AG04450 (cell line): ENCODE measurements at regions of chr1 and their contacts with region 1.

Region 1: GRCh38 chr1:204162231-204163074 is 3.7 kb downstream of the REN start:
- DNase-seq: no peak
- H3K4me3 ChIP-seq: no peak overlapping the region
- H3K27ac ChIP-seq: no peak overlapping the region
- H3K27me3 ChIP-seq: peaks cover 6% of the 10 kb centered on the region
- CTCF ChIP-seq: peak; percentile 100

Region 2: GRCh38 chr1:204104133-204104871 is 58.2 kb before region 1 on chr1:
- CTCF ChIA-PET with region 1: no interaction called
- POLR2A ChIA-PET with region 1: no interaction called
- DNase-seq: no peak
- H3K4me3 ChIP-seq: no peak overlapping the region
- H3K27ac ChIP-seq: no peak overlapping the region
- H3K27me3 ChIP-seq: peaks cover 10% of the 10 kb centered on the region
- CTCF ChIP-seq: no peak

Region 3: GRCh38 chr1:204151552-204152309 is 10.7 kb before region 1 on chr1 and contains the start of gene ETNK2:
- CTCF ChIA-PET with region 1: interaction called, 11 read pairs
- POLR2A ChIA-PET with region 1: interaction called, 3 read pairs
- DNase-seq: no peak
- H3K4me3 ChIP-seq: peak within 1 kb of the TSS; percentile 67
- H3K27ac ChIP-seq: no peak within 1 kb of the TSS
- H3K27me3 ChIP-seq: peaks cover 11% of the 10 kb centered on the region
- CTCF ChIP-seq: no peak
- polyA plus RNA-seq, gene ETNK2: 25.1 and 25.6 TPM in 2 replicates

Region 4: DNA sequence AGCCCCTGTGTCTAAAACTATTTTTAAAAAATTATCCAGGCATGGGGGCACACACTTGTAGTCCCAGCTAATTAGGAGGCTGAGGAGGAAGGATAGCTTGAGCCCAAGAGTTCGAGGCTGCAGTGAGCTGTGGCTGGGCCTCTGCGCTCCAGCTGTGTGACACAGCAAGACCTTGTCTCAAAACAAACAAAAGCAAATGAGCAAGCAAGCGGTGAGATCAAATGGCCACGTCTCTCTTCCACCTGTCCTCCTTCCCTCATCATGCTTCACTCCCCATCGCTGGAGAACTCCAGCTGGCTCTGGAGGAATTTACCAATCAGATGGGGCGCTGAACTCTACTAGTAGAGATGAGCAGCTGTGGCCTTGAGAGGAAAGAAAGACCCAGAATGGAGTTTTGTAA is 17.7 kb after region 1 on chr1:
- CTCF ChIA-PET with region 1: interaction called, 12 read pairs
- POLR2A ChIA-PET with region 1: no interaction called
- DNase-seq: no peak
- H3K4me3 ChIP-seq: no peak overlapping the region
- H3K27ac ChIP-seq: no peak overlapping the region
- H3K27me3 ChIP-seq: no peaks in the 10 kb centered on the region
- CTCF ChIP-seq: no peak

Region 5: DNA sequence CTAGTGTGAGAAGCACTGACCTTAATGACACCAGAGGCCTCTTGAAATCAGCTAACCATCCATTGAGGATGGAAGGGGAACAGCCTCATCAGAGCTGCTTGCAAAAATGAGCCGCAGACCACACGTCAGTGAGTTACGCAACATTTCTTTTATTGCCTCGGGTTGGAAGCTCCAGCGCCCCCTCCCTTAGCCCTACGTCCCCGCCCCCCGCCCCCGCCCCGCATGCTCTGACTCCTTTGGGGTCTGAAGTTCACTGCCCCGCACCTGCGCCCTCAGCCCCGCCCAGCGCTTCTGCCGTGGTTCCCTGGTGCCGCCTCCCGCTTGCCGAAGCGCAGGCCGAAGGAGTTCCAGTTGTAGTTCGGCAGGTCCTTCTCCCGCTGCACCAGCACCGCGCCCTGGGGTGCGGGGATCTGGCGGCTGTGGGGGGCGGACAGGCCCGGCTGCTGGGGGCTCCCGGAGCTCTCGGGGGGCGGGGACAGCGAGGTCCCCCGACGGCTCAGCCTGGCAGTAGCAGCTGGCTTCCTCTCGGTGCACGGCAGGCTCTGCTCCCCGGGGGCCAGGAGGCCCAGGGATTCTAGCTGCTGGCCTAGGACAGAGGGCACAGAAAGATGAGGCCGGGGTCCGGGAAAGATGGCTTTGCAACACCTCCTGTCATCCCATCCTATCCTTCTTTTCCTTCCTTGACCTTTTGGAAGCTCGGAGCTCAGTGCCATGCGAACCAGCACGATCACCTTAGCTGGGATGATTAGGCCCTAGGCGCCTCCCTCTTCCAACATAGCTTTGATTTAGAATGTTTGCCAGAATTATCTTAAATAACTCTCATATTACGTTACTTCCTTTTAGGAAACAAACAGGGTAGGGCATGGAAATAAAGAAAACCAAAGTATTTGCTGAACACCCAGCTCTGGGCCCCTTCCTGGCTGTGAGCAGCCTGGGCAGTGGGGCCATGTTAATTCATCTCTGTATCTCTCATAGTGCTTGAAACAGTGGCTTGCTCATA is 28.1 kb after region 1 on chr1:
- CTCF ChIA-PET with region 1: interaction called, 17 read pairs
- POLR2A ChIA-PET with region 1: no interaction called
- DNase-seq: no peak
- H3K4me3 ChIP-seq: peak overlapping the region; percentile 17; the same call in 1 of the 2 replicates
- H3K27ac ChIP-seq: no peak overlapping the region
- H3K27me3 ChIP-seq: peaks cover 6% of the 10 kb centered on the region
- CTCF ChIP-seq: no peak

Region 6: GRCh38 chr1:204198151-204198994 is 35.9 kb after region 1 on chr1:
- CTCF ChIA-PET with region 1: interaction called, 190 read pairs
- POLR2A ChIA-PET with region 1: no interaction called
- DNase-seq: peak; percentile 46
- H3K4me3 ChIP-seq: no peak overlapping the region
- H3K27ac ChIP-seq: peak overlapping the region; percentile 63
- H3K27me3 ChIP-seq: no peaks in the 10 kb centered on the region
- CTCF ChIP-seq: no peak